ENCODE measurements at regions of chr11 and their contacts with region 1.

Region 1: DNA sequence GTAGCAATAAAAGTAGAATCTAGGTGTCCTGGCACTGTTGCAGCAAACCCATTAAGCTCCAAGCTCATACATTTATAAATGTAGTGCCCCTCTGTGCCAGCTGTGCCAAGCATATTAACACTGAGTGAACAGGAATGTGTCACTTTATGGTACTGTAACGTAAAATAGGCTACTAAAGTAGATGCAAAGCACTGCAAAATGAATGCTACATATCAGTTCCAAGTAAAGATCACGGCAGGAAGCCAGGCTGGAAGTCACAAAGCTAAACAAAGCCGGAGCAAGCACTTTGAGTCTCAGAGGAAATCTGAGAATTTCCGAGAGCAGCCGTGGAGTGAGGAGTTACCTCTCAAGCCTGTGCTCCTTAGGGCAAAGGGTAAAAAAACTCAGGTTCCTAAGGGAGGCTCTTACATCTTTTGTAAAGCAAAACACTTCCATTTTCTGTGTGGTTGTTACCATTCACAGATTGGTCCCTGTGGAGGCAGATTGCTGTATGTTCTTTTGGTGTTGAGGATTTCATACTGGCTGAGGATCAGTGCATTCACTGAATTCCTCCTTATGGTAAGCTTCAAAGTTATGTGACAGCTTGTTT is 85.7 kb downstream of the WNT11 start:
- DNase-seq: peak in 1 of 2 donors; percentile 53
- ATAC-seq: peak; percentile 41 to 85 (median 70)
- H3K4me3 ChIP-seq: no peak overlapping the region
- H3K27ac ChIP-seq: peak overlapping the region in 9 of 10 donors; percentile 3 to 75 (median 61)
- H3K4me1 ChIP-seq: peaks cover 19 to 78% (median 54%) of the 10 kb centered on the region in 9 donors
- H3K27me3 ChIP-seq: no peaks in the 10 kb centered on the region
- CTCF ChIP-seq: no peak

Region 2: GRCh38 chr11:76074148-76075095 is 46.2 kb before region 1 on chr11:
- intact Hi-C with region 1: loop called in 1 of 10 experiments (anchors 5 kb)
- DNase-seq: no peak
- ATAC-seq: peak in 7 of 8 donors; percentile 17 to 63 (median 47)
- H3K4me3 ChIP-seq: no peak overlapping the region
- H3K27ac ChIP-seq: peak overlapping the region in 7 of 10 donors; percentile 1 to 72 (median 10)
- H3K4me1 ChIP-seq: peaks cover 0 to 51% (median 39%) of the 10 kb centered on the region in 9 donors
- H3K27me3 ChIP-seq: no peaks in the 10 kb centered on the region
- CTCF ChIP-seq: no peak

Region 3: DNA sequence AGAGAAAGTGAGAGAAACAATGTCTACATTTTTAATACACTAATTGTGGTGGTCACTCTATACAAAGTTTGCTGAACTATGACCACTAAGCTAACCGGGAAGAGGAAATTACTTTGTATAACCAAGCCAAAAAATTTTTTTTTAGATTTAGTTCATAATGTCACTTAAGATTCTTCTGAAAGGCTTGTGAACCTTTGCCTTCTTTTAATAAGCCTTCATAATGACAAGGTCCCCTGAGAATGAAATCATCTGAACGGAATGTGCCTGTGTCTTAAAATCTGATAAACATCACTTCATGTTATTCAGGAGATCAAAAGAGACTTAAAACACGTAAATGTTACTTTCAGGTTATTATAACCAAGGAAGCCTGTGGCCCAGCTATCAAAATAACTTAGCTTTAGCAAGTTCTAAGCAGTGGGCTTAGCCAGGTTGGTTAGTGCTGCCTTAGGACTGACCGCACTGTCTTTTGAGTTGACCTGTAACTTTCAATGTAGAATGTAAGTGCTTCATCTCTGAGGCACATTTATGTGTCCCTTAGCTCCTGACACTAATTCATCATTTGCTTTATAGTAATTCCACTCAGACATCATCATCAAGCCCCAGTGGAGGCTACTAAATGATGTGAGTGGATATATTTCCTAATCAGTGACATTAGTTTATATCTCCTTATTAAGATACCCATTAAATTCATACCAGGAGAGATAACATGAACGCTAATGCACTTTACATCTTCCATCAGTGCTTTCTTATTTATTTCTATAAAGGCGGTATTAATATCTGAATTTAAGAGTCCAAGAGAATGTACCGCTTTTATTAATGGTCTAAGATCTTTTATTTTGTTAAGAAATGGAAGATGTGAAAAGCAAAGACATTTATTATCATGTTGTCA is 36.8 kb before region 1 on chr11:
- intact Hi-C with region 1: loop called in 4 of 10 experiments (anchors 5 kb)
- DNase-seq: no peak
- ATAC-seq: peak in 6 of 8 donors; percentile 52 to 89 (median 76)
- H3K4me3 ChIP-seq: no peak overlapping the region
- H3K27ac ChIP-seq: peak overlapping the region in 7 of 10 donors; percentile 10 to 76 (median 60)
- H3K4me1 ChIP-seq: peaks cover 3 to 50% (median 19%) of the 10 kb centered on the region in 9 donors
- H3K27me3 ChIP-seq: no peaks in the 10 kb centered on the region
- CTCF ChIP-seq: no peak